Activated T-helper 2 cell treated with anti-CD3 and anti-CD28 coated beads, Interferon-gamma antibody, Interleukin-2, Interleukin-4, amounts not matched to agents 10 μg/mL and 5 μg/mL and 100 μg/mL, durations not matched to agents 14 hours and 24 hours and 36 hours (primary cell): ENCODE measurements at regions of chr2 and their contacts with region 1.

Region 1: DNA sequence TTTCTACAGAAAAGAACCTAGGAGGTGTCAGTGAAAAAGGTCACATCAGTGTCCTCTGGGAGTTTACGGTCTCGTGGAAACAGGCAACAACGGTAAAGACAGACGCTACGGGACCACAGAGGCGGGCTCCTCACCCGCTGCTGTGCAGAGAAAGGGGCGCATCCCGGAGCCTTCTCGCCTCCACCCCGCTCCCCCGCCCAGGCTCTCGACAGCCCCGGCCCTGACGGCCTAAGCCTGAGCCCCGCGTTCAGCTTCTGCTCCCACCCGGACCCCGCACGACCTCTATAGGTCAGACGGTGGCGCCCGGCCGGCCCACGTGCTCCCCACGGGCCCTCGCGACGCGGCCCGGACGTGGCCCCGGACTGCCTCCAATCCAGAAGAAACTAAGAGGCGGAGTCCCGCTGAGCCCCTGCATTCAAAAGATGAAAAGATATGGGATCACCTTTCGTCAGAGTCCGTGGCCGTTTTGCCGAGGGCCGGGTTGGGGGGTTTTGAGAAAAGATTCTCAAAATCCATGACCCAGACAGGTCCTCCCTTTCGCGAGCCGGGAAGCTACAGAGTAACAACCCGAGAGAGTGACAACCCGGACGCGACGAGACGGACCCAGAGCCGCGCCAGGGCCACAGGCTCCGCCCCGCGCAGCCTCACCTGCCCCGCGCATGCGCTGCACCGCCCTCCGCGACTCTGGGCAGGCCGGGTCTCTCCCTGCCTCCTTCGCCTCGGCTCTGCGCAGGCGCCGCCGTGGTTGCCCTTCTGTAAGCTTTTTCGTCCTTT is at the start of gene ZC3H8:
- DNase-seq: peak; percentile 95
- H3K4me3 Mint-ChIP-seq: peak within 1 kb of the TSS; percentile 31
- H3K27ac Mint-ChIP-seq: peak within 1 kb of the TSS; percentile 91
- H3K4me1 Mint-ChIP-seq: peaks cover 24% of the 10 kb centered on the region
- H3K27me3 Mint-ChIP-seq: no peaks in the 10 kb centered on the region
- total RNA-seq, gene ZC3H8: 31.8 and 33.4 TPM in 2 replicates

Region 2: GRCh38 chr2:110828330-110828729 is 1426.3 kb before region 1 on chr2:
- intact Hi-C with region 1: no loop called
- DNase-seq: no peak
- H3K4me3 Mint-ChIP-seq: no peak overlapping the region
- H3K27ac Mint-ChIP-seq: no peak overlapping the region
- H3K4me1 Mint-ChIP-seq: peaks cover 6% of the 10 kb centered on the region
- H3K27me3 Mint-ChIP-seq: peaks cover 49% of the 10 kb centered on the region

Region 3: GRCh38 chr2:112054847-112055729 is 199.6 kb before region 1 on chr2 and contains the start of gene TMEM87B:
- intact Hi-C with region 1: loop called (anchors 2 kb)
- DNase-seq: peak; percentile 97
- H3K4me3 Mint-ChIP-seq: peak within 1 kb of the TSS; percentile 98
- H3K27ac Mint-ChIP-seq: peak within 1 kb of the TSS; percentile 97
- H3K4me1 Mint-ChIP-seq: peaks cover 32% of the 10 kb centered on the region
- H3K27me3 Mint-ChIP-seq: peaks cover 3% of the 10 kb centered on the region
- total RNA-seq, gene TMEM87B: 15.8 and 16.5 TPM in 2 replicates

Region 4: DNA sequence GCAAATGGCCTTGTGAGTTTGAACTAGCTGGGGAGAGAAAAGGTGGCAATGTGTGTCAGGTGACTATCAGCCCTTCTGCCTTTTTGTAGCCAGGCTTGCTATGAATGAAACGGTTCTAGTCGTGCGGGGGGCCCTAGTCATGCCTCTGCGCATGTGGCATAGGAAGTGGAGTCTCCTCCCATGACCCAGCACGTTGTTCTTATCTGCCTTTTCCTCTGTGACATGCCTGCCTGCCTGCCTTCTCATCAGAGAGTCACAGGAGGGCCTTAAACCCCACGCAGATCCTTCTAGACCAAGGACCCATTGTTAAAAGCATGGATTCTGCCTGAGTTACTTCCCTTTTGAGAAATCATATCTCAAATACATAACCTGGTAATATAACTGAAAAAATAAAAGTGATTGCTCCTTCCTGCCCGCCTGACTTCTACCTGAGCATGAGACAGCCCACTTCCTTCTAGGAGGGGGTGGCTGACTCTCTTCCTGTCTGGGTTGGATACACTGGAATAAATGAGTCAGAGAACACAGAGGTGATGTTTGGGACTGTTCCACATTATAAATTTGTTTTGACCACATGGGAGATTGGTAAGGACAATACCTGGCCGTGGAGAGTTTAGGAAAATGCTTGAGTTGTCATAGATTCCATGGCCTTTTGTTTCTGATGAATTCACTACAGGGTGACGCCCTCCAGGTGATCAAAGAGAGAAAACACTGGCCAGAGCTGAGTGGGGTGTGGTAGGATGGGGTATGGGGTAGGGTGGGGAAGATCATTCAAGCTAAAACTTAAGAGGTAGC is 66.7 kb before region 1 on chr2:
- intact Hi-C with region 1: loop called (anchors 2 kb)
- DNase-seq: peak; percentile 73
- H3K4me3 Mint-ChIP-seq: peak overlapping the region; percentile 31
- H3K27ac Mint-ChIP-seq: peak overlapping the region; percentile 98
- H3K4me1 Mint-ChIP-seq: peaks cover 70% of the 10 kb centered on the region
- H3K27me3 Mint-ChIP-seq: no peaks in the 10 kb centered on the region

Region 5: GRCh38 chr2:112481050-112481527 is 226.4 kb after region 1 on chr2:
- intact Hi-C with region 1: loop called (anchors 2 kb)
- DNase-seq: peak; percentile 81
- H3K4me3 Mint-ChIP-seq: peak overlapping the region; percentile 92
- H3K27ac Mint-ChIP-seq: peak overlapping the region; percentile 94
- H3K4me1 Mint-ChIP-seq: peaks cover 22% of the 10 kb centered on the region
- H3K27me3 Mint-ChIP-seq: no peaks in the 10 kb centered on the region